ENCODE measurements at regions of chrX and their contacts with region 1.

Region 1: GRCh38 chrX:38458071-38458470 is 103.3 kb upstream of the TSPAN7 start:
- DNase-seq: no peak
- ATAC-seq: no peak
- H3K4me3 ChIP-seq: no peak overlapping the region
- H3K27ac ChIP-seq: no peak overlapping the region
- H3K4me1 ChIP-seq: peaks cover 1% of the 10 kb centered on the region
- H3K27me3 ChIP-seq: no peaks in the 10 kb centered on the region

Region 2: GRCh38 chrX:38538134-38538533 is 80.1 kb after region 1 on chrX:
- intact Hi-C with region 1: no loop called
- DNase-seq: no peak
- ATAC-seq: no peak
- H3K4me3 ChIP-seq: no peak overlapping the region
- H3K27ac ChIP-seq: no peak overlapping the region
- H3K4me1 ChIP-seq: no peaks in the 10 kb centered on the region
- H3K27me3 ChIP-seq: no peaks in the 10 kb centered on the region

Region 3: DNA sequence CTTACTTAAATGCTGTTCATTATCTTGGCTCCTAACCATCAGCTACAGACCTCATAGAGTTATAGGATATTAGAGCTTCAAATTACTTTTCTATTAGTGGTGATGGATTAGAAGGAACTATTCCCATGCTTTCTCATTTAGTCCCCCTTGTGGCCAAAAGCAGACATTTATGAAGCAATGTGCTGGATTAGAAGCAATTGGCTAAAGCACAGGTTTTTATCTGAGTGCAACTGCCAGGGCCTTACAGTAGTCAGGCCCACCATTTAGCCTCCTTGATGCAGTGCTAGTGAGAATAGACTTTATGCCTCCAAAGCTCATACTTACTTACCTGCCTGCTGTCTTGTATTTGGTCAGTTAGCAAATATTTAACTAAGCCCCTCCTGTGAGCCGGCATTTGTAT is 196.2 kb after region 1 on chrX:
- intact Hi-C with region 1: loop called in 1 of 4 experiments (anchors 10 kb)
- DNase-seq: no peak
- ATAC-seq: peak; percentile 63 to 72
- H3K4me3 ChIP-seq: no peak overlapping the region
- H3K27ac ChIP-seq: no peak overlapping the region
- H3K4me1 ChIP-seq: peaks cover 4% of the 10 kb centered on the region
- H3K27me3 ChIP-seq: no peaks in the 10 kb centered on the region

Measured in right cardiac atrium (tissue), 5 donors.